ENCODE measurements at regions of chr1 and their contacts with region 1.

Region 1: DNA sequence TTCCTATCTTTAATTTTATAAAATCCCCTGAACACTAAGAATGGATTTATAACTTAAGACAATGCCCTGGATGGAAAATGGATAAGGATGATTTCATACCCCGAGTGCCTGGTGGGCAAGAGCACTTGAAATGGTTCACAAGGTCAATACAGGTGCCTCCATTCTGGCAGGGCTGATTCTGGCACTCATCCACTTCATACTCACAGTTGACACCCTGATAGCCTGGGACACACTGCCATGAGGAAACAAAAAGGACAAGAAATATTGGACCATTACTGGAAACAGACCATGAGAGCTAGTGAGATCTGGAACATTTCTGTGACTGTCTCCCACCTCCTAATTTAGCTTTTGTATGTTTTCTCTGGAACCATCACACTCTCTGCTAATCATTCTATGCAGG is 39.1 kb upstream of the ADAM30 start:
- DNase-seq: no peak
- H3K4me3 ChIP-seq: no peak overlapping the region
- H3K27ac ChIP-seq: no peak overlapping the region
- H3K4me1 ChIP-seq: no peaks in the 10 kb centered on the region
- H3K27me3 ChIP-seq: no peaks in the 10 kb centered on the region
- CTCF ChIP-seq: no peak
- POLR2A ChIP-seq: no peak

Region 2: GRCh38 chr1:119743781-119744597 is 191.4 kb before region 1 on chr1:
- intact Hi-C with region 1: loop called (anchors 5 kb)
- DNase-seq: peak; percentile 46 to 67
- H3K4me3 ChIP-seq: no peak overlapping the region
- H3K27ac ChIP-seq: peak overlapping the region in 1 of 2 donors; percentile 70
- H3K4me1 ChIP-seq: no peaks in the 10 kb centered on the region
- H3K27me3 ChIP-seq: no peaks in the 10 kb centered on the region
- CTCF ChIP-seq: peak; percentile 70 to 82 (median 80)
- POLR2A ChIP-seq: no peak